ENCODE measurements at regions of chr16 and their contacts with region 1.

Region 1: GRCh38 chr16:29680180-29680598 is 1.2 kb downstream of the QPRT start:
- DNase-seq: no peak
- H3K4me3 ChIP-seq: peak overlapping the region in 2 of 4 donors; percentile 23 to 32
- H3K27ac ChIP-seq: no peak overlapping the region
- H3K4me1 ChIP-seq: peaks cover 0 to 14% (median 8%) of the 10 kb centered on the region in 4 donors
- H3K27me3 ChIP-seq: no peaks in the 10 kb centered on the region
- CTCF ChIP-seq: no peak
- EP300 ChIP-seq: no peak
- POLR2A ChIP-seq: no peak

Region 2: GRCh38 chr16:29738514-29738913 is 58.3 kb after region 1 on chr16:
- intact Hi-C with region 1: loop called (anchors 10 kb)
- DNase-seq: no peak
- H3K4me3 ChIP-seq: no peak overlapping the region
- H3K27ac ChIP-seq: no peak overlapping the region
- H3K4me1 ChIP-seq: no peaks in the 10 kb centered on the region
- H3K27me3 ChIP-seq: peaks cover 0 to 23% (median 0%) of the 10 kb centered on the region in 3 donors
- CTCF ChIP-seq: no peak
- EP300 ChIP-seq: no peak
- POLR2A ChIP-seq: no peak